CD8-positive, alpha-beta T cell (primary cell): ENCODE measurements at regions of chr7 and their contacts with region 1.

Region 1: GRCh38 chr7:42567051-42567450 is 330.0 kb upstream of the GLI3 start:
- DNase-seq: no peak
- ATAC-seq: no peak
- H3K4me3 ChIP-seq: no peak overlapping the region
- H3K4me3 Mint-ChIP-seq: no peak overlapping the region
- H3K27ac ChIP-seq: no peak overlapping the region
- H3K27ac Mint-ChIP-seq: no peak overlapping the region
- H3K4me1 ChIP-seq: no peaks in the 10 kb centered on the region
- H3K4me1 Mint-ChIP-seq: no peaks in the 10 kb centered on the region
- H3K27me3 ChIP-seq: no peaks in the 10 kb centered on the region
- H3K27me3 Mint-ChIP-seq: no peaks in the 10 kb centered on the region
- CTCF ChIP-seq: no peak

Region 2: DNA sequence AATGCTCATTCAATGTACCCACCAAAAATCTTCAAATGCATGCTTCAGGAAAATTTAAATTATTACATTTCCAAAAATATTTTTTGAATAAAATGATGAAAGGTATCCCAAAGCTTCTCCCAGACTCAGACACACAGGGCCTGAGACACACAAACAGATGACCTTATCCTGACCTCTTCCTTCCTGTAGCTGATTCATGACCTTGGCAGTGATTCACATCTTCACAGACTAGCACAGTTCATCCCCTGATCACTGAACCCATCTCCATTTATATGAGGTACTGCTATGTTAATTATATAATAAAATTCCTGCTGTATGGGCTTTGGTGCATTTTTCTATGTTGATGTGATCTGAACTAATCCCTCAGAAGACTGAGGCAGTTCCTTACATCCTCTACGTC is 65.0 kb before region 1 on chr7:
- CTCF ChIA-PET with region 1: no interaction called
- POLR2A ChIA-PET with region 1: no interaction called
- intact Hi-C with region 1: loop called in 1 of 2 experiments (anchors 10 kb)
- DNase-seq: no peak
- ATAC-seq: no peak
- H3K4me3 ChIP-seq: no peak overlapping the region
- H3K4me3 Mint-ChIP-seq: no peak overlapping the region
- H3K27ac ChIP-seq: no peak overlapping the region
- H3K27ac Mint-ChIP-seq: no peak overlapping the region
- H3K4me1 ChIP-seq: no peaks in the 10 kb centered on the region
- H3K4me1 Mint-ChIP-seq: no peaks in the 10 kb centered on the region
- H3K27me3 ChIP-seq: no peaks in the 10 kb centered on the region
- H3K27me3 Mint-ChIP-seq: no peaks in the 10 kb centered on the region
- CTCF ChIP-seq: no peak

Region 3: DNA sequence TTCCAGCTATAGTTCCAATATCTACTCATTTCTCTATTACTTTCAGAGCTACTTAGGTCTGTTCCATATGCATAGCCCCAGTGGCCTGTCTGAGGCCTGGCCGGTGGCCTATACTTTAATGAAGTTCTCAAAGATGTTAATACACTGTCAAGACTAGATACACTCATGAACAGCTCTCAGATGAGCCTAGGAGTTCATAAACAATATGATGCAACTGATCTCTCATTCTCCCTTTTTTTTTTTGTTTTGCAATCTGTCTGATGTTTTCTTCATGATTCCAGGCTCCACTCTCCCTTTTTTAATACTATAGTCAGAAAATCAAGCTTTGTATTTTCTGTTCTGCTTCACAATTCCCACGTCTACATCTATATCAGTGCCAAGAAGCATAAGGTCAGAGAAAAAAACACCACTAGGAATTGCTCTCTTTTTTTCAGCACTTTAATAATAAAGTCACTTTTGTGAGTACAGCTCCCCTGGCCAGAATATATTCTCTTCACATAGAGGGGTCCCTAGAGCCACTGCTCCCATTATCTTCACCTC is 23.8 kb after region 1 on chr7:
- CTCF ChIA-PET with region 1: no interaction called
- POLR2A ChIA-PET with region 1: no interaction called
- intact Hi-C with region 1: no loop called
- DNase-seq: no peak
- ATAC-seq: no peak
- H3K4me3 ChIP-seq: no peak overlapping the region
- H3K4me3 Mint-ChIP-seq: no peak overlapping the region
- H3K27ac ChIP-seq: no peak overlapping the region
- H3K27ac Mint-ChIP-seq: no peak overlapping the region
- H3K4me1 ChIP-seq: no peaks in the 10 kb centered on the region
- H3K4me1 Mint-ChIP-seq: no peaks in the 10 kb centered on the region
- H3K27me3 ChIP-seq: no peaks in the 10 kb centered on the region
- H3K27me3 Mint-ChIP-seq: peaks cover 2% of the 10 kb centered on the region
- CTCF ChIP-seq: no peak

Region 4: GRCh38 chr7:42907316-42907715 is 340.3 kb after region 1 on chr7:
- CTCF ChIA-PET with region 1: no interaction called
- POLR2A ChIA-PET with region 1: no interaction called
- intact Hi-C with region 1: no loop called
- DNase-seq: no peak
- ATAC-seq: no peak
- H3K4me3 ChIP-seq: no peak overlapping the region
- H3K4me3 Mint-ChIP-seq: no peak overlapping the region
- H3K27ac ChIP-seq: no peak overlapping the region
- H3K27ac Mint-ChIP-seq: no peak overlapping the region
- H3K4me1 ChIP-seq: peaks cover 14% of the 10 kb centered on the region
- H3K4me1 Mint-ChIP-seq: peaks cover 28% of the 10 kb centered on the region
- H3K27me3 ChIP-seq: no peaks in the 10 kb centered on the region
- H3K27me3 Mint-ChIP-seq: no peaks in the 10 kb centered on the region
- CTCF ChIP-seq: no peak